Left cardiac atrium (tissue), 4 donors: ENCODE measurements at regions of chr6 and their contacts with region 1.

Region 1: DNA sequence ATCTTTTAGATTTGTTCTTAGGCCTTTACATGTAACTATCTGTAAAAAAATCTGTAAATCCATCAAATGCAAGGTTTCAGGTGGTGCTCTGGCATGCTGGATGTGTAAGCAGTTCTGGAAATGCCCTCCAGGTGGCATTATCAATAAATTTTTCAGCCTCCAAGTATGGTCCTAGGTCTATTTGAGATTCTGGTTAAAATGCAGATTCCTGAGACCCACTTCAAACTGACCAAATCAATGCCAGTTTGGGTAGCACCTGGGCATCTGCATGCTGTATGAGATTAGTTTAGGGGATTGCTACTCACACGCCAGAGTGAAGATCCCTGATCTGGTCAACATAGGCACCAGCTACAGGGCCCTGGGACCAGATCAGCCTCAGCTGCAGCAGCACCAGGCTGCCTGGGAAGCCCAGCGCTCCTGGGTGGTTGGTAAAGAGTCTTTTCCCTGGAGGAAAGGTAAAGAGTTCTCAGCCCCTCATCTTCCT is 507.3 kb upstream of the CITED2 start:
- DNase-seq: no peak
- ATAC-seq: peak; percentile 67 to 71

Region 2: DNA sequence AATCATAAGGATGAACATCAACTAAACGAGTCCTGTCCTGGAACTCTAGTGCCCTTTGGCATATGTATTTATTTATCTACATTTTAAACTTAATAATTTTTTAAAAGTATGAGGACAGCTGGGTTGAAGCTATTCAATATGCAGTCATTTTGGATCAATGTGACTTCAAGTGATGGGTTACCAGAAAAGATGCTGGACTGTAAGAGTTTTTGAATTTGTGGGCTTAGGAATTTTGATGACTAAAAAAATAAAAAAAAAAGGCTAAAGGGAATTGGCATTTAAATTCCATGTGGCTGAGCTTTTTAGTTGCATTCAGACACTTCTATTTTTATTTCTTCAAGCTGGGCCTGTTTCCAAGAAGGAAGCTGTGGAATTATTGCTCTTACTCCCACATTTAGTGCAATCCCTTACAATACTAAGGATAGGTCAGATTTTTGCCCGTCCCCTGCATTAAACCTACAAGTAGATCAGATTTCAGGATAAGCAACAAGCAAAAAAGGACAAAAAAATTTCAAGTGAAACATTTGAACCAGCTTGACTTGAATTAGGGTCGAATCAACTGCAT is 196.9 kb after region 1 on chr6:
- intact Hi-C with region 1: loop called in 1 of 2 experiments (anchors 10 kb)
- DNase-seq: no peak
- ATAC-seq: peak; percentile 56 to 77

Region 3: GRCh38 chr6:140441256-140441655 is 559.5 kb after region 1 on chr6:
- intact Hi-C with region 1: loop called in 1 of 2 experiments (anchors 5 kb)
- DNase-seq: peak; percentile 64
- ATAC-seq: peak; percentile 93 to 94